Activated CD4-positive, alpha-beta T cell treated with anti-CD3 and anti-CD28 coated beads for 36 hours (primary cell): ENCODE measurements at regions of chr4 and their contacts with region 1.

Region 1: GRCh38 chr4:52126966-52127365 is 75.9 kb downstream of the SPATA18 start:
- DNase-seq: no peak
- ATAC-seq: no peak
- H3K4me3 Mint-ChIP-seq: no peak overlapping the region
- H3K27ac Mint-ChIP-seq: no peak overlapping the region
- H3K4me1 Mint-ChIP-seq: no peaks in the 10 kb centered on the region
- H3K27me3 Mint-ChIP-seq: no peaks in the 10 kb centered on the region

Region 2: GRCh38 chr4:51943221-51943934 is 183.6 kb before region 1 on chr4:
- CTCF ChIA-PET with region 1: no interaction called
- POLR2A ChIA-PET with region 1: no interaction called
- intact Hi-C with region 1: no loop called
- DNase-seq: no peak
- ATAC-seq: no peak
- H3K4me3 Mint-ChIP-seq: no peak overlapping the region
- H3K27ac Mint-ChIP-seq: no peak overlapping the region
- H3K4me1 Mint-ChIP-seq: no peaks in the 10 kb centered on the region
- H3K27me3 Mint-ChIP-seq: no peaks in the 10 kb centered on the region

Region 3: DNA sequence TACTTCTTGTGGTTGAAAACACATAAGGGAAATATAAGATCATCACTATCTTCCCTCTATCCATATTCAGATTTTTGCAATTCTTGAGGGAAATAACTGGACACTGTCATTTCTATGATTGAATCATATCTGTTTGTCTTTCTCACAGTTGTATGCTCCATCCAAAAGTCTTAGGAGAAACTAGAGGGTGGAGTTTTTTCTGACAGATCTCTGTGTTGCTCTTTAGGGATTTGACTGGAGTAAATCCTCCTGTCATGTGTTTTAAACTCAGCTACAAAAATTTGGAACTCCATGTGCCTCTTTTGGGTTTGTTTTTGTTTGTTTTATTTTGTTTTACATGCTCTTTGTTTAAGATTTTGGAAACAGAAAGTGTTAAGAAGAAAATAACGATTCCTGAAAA is 60.6 kb after region 1 on chr4:
- CTCF ChIA-PET with region 1: no interaction called
- POLR2A ChIA-PET with region 1: no interaction called
- intact Hi-C with region 1: loop called in 1 of 2 experiments (anchors 5 kb)
- DNase-seq: no peak
- ATAC-seq: no peak
- H3K4me3 Mint-ChIP-seq: no peak overlapping the region
- H3K27ac Mint-ChIP-seq: no peak overlapping the region
- H3K4me1 Mint-ChIP-seq: no peaks in the 10 kb centered on the region
- H3K27me3 Mint-ChIP-seq: peaks cover 5% of the 10 kb centered on the region